ENCODE measurements at regions of chr3 and their contacts with region 1.

Region 1: GRCh38 chr3:195863121-195864006 is 45.0 kb downstream of the TNK2 start:
- DNase-seq: peak; percentile 87 to 93 (median 92)
- H3K4me3 ChIP-seq: peak overlapping the region in 1 of 59 donors; percentile 21
- H3K27ac ChIP-seq: peak overlapping the region in 54 of 59 donors; percentile 7 to 84 (median 60)
- H3K27me3 ChIP-seq: no peaks in the 10 kb centered on the region
- CTCF ChIP-seq: peak; percentile 67 to 98 (median 93)

Region 2: DNA sequence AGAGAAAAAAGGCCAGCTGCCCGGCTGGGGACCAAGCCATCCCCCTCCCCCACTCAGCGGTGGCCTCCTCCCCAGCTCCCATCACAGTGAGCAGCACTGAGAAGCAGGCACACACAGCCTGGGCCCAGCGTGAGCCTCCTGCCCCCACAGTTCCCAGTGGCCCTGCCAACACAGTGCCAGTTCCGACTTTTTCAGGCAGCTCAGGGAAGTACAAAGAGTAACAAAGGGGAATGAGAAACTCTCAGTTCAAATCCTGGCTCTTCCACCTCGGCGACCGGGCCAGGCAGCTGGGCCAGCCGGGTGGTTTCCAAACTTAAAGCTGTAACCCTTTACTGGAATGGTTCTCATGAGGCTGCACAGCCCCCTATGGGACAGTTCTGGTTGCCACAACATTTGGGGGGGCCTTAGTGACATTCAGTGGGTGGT is 26.5 kb after region 1 on chr3:
- intact Hi-C with region 1: loop called (anchors 1 kb)
- DNase-seq: peak in 8 of 10 donors; percentile 51 to 81 (median 72)
- H3K4me3 ChIP-seq: peak overlapping the region in 43 of 59 donors; percentile 1 to 93 (median 74)
- H3K27ac ChIP-seq: peak overlapping the region in 55 of 59 donors; percentile 22 to 98 (median 76)
- H3K27me3 ChIP-seq: no peaks in the 10 kb centered on the region
- CTCF ChIP-seq: peak in 9 of 56 donors; percentile 2 to 23 (median 12)

Region 3: DNA sequence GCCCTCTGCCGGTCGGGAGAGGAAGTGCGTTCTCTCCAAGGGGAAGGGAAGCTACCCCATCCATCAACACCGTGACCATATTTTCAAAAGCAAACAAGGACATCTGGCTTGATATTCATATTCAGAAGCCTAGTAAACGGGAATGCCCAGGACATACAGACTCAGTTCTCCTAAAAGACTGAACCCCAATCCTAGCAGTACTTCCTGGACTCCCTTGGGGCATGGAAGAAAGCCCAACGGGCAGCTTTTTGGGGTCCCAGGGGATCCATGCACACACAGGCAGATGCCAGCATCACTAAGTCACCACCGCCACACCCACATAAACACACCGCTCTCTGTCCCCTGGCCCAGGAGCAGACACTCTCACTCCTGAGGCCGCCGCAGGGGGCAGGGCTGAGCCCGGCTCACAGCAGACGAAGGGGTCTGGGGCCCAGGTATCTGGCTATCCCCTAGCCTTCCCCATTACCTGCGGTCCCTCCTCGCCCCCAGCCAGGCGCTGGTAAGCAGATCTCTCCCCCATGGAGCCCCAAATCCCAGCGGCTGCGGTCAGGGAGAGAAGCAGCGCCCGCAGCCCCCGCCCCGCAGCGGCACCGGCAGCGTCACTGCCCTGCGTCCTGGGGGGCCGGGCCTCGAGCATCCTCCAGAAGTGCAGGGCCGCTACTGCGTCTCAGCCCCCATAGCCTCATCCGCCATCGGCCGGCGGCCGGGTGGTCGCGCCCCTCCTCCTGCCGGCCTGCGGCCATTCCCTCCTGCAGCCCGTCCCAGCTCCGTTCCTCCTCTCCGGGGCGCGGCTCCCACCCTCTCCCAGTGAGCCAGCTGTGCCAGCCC is 31.6 kb after region 1 on chr3:
- intact Hi-C with region 1: loop called (anchors 1 kb)
- DNase-seq: peak in 8 of 10 donors; percentile 36 to 75 (median 56)
- H3K4me3 ChIP-seq: peak overlapping the region; percentile 50 to 95 (median 84)
- H3K27ac ChIP-seq: peak overlapping the region; percentile 72 to 98 (median 96)
- H3K27me3 ChIP-seq: no peaks in the 10 kb centered on the region
- CTCF ChIP-seq: peak; percentile 72 to 98 (median 92)

Region 4: DNA sequence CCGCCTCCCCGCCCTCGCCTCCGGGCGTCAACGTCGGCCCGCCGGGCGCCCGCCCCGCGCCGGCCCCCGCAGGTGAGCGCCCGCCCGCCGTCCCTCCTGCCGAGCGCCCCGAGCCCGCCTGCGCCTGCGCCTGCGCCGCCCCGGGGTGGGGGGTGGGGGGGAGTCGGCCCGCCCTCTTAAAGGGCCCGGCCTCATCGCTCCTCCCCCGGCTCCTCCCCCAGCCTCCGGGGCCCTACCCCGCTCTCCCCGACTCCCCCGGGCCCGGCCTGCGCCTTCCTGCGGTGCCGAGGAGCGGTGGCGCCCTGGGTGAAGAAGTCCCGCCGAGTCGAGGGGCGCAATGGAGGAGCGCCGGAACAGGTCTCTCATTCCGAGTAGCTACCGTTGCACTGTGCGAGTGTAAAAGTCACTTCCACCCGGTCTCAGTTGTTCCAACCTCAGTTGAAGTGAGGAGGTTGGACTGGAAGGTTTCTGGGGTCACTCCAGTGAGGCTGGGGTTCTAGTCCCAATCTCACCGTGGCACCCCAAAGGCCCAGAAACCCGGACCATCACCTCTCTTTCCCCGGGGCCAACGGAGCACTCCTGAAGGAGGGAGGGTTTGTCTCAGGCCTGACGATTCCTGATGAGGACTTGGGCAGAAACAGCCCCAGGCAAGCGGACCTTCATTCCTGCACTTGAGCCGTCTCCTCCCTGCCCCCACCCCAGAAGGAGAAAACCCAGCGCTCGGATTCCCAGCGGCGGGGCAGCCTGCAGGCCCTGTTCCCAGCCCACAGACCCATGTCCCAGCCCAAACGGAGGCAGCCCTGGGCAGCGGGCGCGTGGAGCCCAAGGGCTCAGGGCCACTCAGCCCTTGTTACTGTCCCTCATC is 46.5 kb after region 1 on chr3:
- intact Hi-C with region 1: loop called in 1 of 2 experiments (anchors 1 kb)
- DNase-seq: peak; percentile 74 to 91 (median 85)
- H3K4me3 ChIP-seq: peak overlapping the region; percentile 37 to 84 (median 71)
- H3K27ac ChIP-seq: peak overlapping the region in 53 of 59 donors; percentile 29 to 90 (median 77)
- H3K27me3 ChIP-seq: no peaks in the 10 kb centered on the region
- CTCF ChIP-seq: peak in 26 of 56 donors; percentile 4 to 43 (median 22)

Measured in dorsolateral prefrontal cortex (tissue), 120 donors.